ENCODE measurements at regions of chr10 and their contacts with region 1.

Region 1: DNA sequence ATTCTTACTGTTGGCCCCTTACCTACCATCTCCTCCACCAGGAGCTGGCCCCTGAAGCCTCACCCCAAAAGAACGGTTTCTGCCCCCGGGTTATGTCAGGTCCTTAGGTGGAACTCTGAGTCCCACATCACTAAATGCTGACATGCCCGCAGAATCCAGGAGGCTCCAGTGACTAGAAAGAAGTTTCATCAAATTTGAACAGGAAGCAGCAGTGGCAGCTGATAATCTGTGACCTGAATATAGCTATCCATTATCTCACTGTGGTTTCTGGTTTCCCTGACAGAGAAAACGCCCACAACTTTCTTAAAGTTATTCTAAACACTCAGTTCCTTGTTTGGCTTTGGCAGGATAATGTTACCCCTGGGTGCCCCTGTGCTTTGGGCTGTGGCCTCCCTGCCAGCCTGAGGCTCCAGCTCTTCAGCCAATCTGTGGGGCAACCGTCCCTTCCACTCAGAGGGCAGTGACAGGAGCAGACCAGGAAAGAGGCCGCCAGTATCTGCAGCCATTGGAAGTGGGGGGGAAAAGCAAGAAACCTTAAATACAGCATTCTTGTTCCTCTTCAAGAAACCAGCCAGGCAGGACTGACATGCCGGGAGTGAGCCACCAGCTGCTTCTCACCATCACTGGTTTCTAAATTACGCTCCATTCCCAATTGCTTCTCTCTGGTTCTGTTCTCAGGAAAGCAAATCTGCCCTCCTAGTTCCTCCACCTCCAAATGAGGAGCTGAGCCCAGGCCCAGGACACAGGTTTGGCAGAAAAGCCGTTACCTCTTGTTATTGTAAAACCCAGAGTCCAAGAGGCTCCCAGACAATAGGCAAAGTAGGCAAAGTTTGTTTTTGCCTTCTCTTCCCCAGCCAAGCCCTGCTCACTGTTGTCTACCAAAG is 41.2 kb upstream of the VCL start:
- DNase-seq: peak; percentile 44 to 92 (median 67)
- ATAC-seq: peak; percentile 85
- H3K4me3 ChIP-seq: no peak overlapping the region; the same call in 1 of the 2 replicates
- H3K27ac ChIP-seq: peak overlapping the region; percentile 72
- H3K4me1 ChIP-seq: peaks cover 35 to 36% of the 10 kb centered on the region in 2 experiments
- H3K27me3 ChIP-seq: no peaks in the 10 kb centered on the region
- CTCF ChIP-seq: no peak; a peak in 1 of 6 replicates
- EP300 ChIP-seq: peak; percentile 97
- POLR2A ChIP-seq: peak; percentile 54; the same call in 1 of the 2 replicates
- RAD21 ChIP-seq: peak; percentile 16 to 49; a peak in 3 of 4 replicates

Region 2: DNA sequence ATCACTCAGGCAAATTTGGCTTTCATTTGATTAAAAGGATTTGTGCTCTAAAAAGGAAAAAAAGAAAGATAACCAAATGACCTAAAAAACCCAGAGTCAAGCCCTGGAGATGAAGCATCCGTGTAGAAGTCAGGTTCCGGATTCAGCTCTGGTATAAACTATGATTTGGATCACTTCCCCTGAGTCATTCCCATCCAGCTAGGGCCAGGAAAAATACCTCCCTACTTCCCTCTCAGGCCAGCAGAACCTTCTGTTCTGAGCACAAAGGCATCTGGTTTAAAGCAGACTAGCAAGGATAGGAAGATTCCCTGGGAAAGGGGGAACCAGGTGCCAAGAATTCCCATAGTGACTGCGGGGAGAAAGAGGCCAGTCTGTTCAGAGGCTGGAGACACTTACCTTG is 119.6 kb before region 1 on chr10:
- CTCF ChIA-PET with region 1: no interaction called
- POLR2A ChIA-PET with region 1: no interaction called
- in situ Hi-C with region 1: no loop called
- intact Hi-C with region 1: no loop called
- DNase-seq: no peak
- ATAC-seq: no peak
- H3K4me3 ChIP-seq: no peak overlapping the region
- H3K27ac ChIP-seq: no peak overlapping the region
- H3K4me1 ChIP-seq: peaks cover 0 to 10% of the 10 kb centered on the region in 2 experiments; a peak in 1 of 5 replicates
- H3K27me3 ChIP-seq: no peaks in the 10 kb centered on the region
- CTCF ChIP-seq: no peak
- EP300 ChIP-seq: no peak
- POLR2A ChIP-seq: no peak
- RAD21 ChIP-seq: no peak

Region 3: GRCh38 chr10:73968098-73968521 is 11.4 kb after region 1 on chr10:
- CTCF ChIA-PET with region 1: interaction called, 4 read pairs
- POLR2A ChIA-PET with region 1: interaction called, 10 read pairs
- in situ Hi-C with region 1: no loop called
- intact Hi-C with region 1: no loop called
- DNase-seq: no peak
- ATAC-seq: peak; percentile 43
- H3K4me3 ChIP-seq: no peak overlapping the region
- H3K27ac ChIP-seq: no peak overlapping the region
- H3K4me1 ChIP-seq: peaks cover 13 to 27% of the 10 kb centered on the region in 2 experiments; a peak in 4 of 5 replicates
- H3K27me3 ChIP-seq: no peaks in the 10 kb centered on the region
- CTCF ChIP-seq: no peak
- EP300 ChIP-seq: no peak
- POLR2A ChIP-seq: no peak
- RAD21 ChIP-seq: no peak

Region 4: GRCh38 chr10:74011770-74012169 is 55.1 kb after region 1 on chr10:
- CTCF ChIA-PET with region 1: no interaction called
- POLR2A ChIA-PET with region 1: no interaction called
- in situ Hi-C with region 1: no loop called
- intact Hi-C with region 1: no loop called
- DNase-seq: peak in 1 of 4 experiments; percentile 84
- ATAC-seq: peak; percentile 50
- H3K4me3 ChIP-seq: no peak overlapping the region
- H3K27ac ChIP-seq: peak overlapping the region; percentile 53; the same call in 2 of the 3 replicates
- H3K4me1 ChIP-seq: peaks cover 32 to 50% of the 10 kb centered on the region in 2 experiments
- H3K27me3 ChIP-seq: no peaks in the 10 kb centered on the region
- CTCF ChIP-seq: no peak
- EP300 ChIP-seq: no peak
- POLR2A ChIP-seq: no peak
- RAD21 ChIP-seq: peak in 1 of 2 experiments; percentile 4; a peak in 1 of 4 replicates

Region 5: GRCh38 chr10:74058658-74059057 is 101.9 kb after region 1 on chr10:
- CTCF ChIA-PET with region 1: no interaction called
- POLR2A ChIA-PET with region 1: no interaction called
- in situ Hi-C with region 1: no loop called
- intact Hi-C with region 1: loop called (anchors 5 kb)
- DNase-seq: peak in 2 of 4 experiments; percentile 34 to 61
- ATAC-seq: peak; percentile 71
- H3K4me3 ChIP-seq: no peak overlapping the region
- H3K27ac ChIP-seq: no peak overlapping the region
- H3K4me1 ChIP-seq: peaks cover 11 to 30% of the 10 kb centered on the region in 2 experiments; a peak in 4 of 5 replicates
- H3K27me3 ChIP-seq: no peaks in the 10 kb centered on the region
- CTCF ChIP-seq: peak; percentile 40 to 52 (median 44); a peak in 4 of 6 replicates
- EP300 ChIP-seq: no peak
- POLR2A ChIP-seq: no peak
- RAD21 ChIP-seq: peak; percentile 56 to 73